ENCODE measurements at regions of chr19 and their contacts with region 1.

Region 1: DNA sequence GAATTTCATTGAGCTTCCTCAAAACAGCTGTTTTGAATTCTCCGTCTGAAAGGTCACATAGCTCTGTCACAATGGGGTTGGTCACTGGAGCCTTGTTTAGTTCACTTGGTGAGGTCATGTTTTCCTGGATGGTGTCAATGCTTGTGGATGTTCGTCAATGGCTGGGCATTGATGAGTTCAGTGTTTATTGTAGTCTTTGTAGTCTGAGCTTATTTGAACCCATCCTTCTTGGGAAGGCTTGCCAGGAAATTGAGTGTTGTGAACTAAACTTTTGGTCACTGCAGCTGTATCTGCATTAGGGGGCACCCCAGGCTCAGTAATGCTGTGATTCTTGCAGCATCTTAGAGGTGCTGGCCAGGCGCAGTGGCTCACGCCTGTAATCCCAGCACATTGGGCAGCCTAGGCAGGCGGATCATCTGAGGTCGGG is 22.0 kb downstream of the BLOC1S3 start:
- DNase-seq: no peak
- H3K4me3 ChIP-seq: no peak overlapping the region
- H3K27ac ChIP-seq: no peak overlapping the region
- H3K4me1 ChIP-seq: no peaks in the 10 kb centered on the region
- H3K27me3 ChIP-seq: peaks cover 0 to 6% (median 0%) of the 10 kb centered on the region in 4 donors
- CTCF ChIP-seq: peak in 2 of 3 experiments; percentile 25 to 27
- EP300 ChIP-seq: no peak
- POLR2A ChIP-seq: no peak

Region 2: DNA sequence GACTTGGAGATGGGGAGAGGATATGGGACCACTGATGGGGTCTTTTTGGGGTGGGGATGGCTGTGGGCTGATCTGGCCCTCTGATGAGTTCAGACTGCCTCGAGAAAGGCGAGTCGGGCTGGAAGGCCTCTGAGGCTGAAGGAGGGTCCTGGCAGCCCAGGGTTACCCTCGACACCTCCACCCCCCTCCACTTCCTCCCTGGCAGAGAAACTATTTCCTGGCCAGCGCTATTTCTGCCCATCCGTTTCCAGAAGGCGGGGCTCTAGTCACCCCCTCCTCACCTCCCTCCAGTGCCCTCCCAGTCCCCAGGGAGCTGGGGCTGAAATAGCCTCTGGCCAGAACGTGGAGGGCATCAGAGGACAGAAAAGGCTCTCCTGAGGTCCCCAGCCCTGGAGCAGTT is 34.9 kb after region 1 on chr19:
- intact Hi-C with region 1: loop called (anchors 5 kb)
- DNase-seq: no peak
- H3K4me3 ChIP-seq: no peak overlapping the region
- H3K27ac ChIP-seq: no peak overlapping the region
- H3K4me1 ChIP-seq: peaks cover 3 to 13% (median 8%) of the 10 kb centered on the region in 4 donors
- H3K27me3 ChIP-seq: peaks cover 0 to 72% (median 9%) of the 10 kb centered on the region in 4 donors
- CTCF ChIP-seq: no peak
- EP300 ChIP-seq: no peak
- POLR2A ChIP-seq: no peak

Measured in esophagus muscularis mucosa (tissue), 4 donors.